Heart left ventricle (tissue), 16 donors: ENCODE measurements at regions of chr17 and their contacts with region 1.

Region 1: DNA sequence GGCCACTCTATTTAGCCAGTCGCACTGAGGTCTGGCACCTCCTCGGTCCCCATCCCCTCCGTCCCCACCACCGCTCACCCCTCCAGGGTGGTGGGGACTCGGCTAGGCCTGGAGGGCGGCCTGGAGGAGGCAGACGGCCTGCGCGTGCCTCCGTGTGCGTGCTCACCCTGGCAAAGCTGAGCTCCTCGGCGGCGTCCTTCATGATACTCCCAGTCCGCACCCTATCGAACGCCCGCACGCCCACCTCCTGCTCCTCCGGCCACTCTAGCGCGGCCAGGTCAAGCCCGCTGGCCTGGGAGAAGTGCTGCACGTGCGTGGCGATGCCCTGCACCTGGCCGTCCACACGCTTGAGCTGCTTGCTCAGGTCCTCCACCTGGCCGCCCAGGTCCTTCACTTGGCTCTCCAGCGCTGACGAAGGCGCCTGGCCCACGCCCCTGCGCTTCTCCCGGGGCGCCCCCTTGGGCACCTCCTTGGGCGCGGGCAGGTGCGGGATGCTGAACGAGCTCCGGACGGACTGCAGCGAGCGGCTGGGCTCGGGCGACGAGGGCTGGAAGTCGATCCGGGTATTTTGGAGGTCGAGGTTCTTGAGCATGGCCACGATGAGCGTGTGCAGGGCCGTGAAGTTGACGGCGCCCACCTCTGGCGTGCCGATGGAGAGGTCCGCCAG is 644 bp downstream of the QRICH2 start:
- DNase-seq: no peak
- ATAC-seq: peak in 1 of 4 donors; percentile 10
- H3K4me3 ChIP-seq: no peak overlapping the region
- H3K27ac ChIP-seq: no peak overlapping the region
- H3K4me1 ChIP-seq: peaks cover 0 to 3% (median 0%) of the 10 kb centered on the region in 12 donors
- H3K27me3 ChIP-seq: no peaks in the 10 kb centered on the region
- CTCF ChIP-seq: no peak
- POLR2A ChIP-seq: no peak

Region 2: DNA sequence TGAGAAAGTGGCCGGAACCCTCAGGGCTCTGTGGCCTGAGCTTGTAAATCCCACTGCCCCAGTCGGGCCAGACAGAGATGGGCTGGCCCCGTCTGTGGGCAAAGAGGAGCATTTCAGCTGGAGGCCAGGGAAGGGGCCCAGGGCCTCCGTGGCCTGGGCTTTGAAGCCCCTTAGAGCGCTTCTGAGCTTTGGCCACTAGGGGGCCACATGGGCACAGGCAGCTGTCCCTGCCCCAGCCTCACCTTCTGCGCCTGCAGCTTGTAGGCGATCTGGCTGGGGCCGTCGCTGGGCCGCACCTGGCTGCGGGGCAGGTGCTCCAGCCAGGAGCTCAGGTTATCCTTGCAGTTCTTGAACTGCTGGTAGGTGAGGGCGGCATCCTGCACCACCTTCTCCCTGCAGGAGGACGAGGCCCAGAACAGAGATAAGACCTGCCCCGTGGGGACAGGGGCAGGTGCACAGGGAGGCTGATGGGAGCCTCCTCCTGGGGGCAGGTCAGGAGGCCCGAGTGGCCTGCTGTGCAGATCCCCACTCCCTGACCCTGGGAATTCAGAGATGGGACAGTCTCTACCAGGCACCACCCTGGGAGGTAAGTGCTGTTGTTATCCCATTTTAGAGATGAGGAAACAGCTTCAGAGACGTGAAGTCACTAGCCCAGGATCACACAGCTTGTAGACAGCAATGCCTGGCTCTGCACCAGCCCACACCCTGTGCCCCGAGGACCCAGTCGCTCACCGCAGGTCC is 293.1 kb before region 1 on chr17:
- intact Hi-C with region 1: loop called in 2 of 10 experiments (anchors 5 kb)
- DNase-seq: peak; percentile 55 to 86 (median 67)
- ATAC-seq: peak; percentile 76 to 90 (median 80)
- H3K4me3 ChIP-seq: no peak overlapping the region
- H3K27ac ChIP-seq: no peak overlapping the region
- H3K4me1 ChIP-seq: peaks cover 0 to 6% (median 1%) of the 10 kb centered on the region in 12 donors
- H3K27me3 ChIP-seq: no peaks in the 10 kb centered on the region
- CTCF ChIP-seq: peak; percentile 86 to 99 (median 96)
- POLR2A ChIP-seq: no peak

Region 3: GRCh38 chr17:76262732-76263344 is 44.6 kb before region 1 on chr17:
- intact Hi-C with region 1: no loop called
- DNase-seq: no peak
- ATAC-seq: no peak
- H3K4me3 ChIP-seq: no peak overlapping the region
- H3K27ac ChIP-seq: peak overlapping the region in 6 of 12 donors; percentile 34 to 96 (median 42)
- H3K4me1 ChIP-seq: peaks cover 6 to 58% (median 24%) of the 10 kb centered on the region in 12 donors
- H3K27me3 ChIP-seq: no peaks in the 10 kb centered on the region
- CTCF ChIP-seq: no peak
- POLR2A ChIP-seq: no peak

Region 4: DNA sequence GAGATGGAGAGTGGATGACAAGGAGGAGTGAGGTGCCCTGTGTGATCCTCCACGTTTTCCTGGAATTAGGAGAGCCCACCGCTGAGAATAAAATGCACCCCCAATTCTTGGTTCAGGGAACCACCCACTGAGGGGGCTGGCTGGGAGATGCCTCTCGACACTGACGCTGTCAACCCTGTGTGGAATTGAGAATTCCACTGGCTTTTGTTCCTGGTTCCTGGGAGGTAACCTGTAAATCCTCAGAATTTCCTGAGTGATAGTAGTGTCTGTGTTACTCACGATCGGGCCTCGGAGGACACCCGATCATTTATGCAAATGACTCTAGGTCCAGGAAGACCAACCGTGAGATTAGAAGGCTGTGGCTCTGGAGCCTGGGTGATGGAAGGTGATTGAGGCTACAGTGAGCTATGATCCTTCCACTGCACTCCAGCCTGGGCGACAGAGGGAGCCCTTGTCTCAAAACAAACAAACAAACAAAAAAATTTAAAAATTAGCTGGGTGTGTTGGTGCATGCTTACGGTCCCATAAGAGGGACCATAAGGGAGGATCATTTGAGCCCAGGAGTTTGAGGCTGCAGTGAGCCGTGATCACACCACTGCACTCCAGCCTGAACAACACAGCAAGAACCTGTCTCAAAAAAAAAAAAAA is 57.9 kb after region 1 on chr17:
- intact Hi-C with region 1: no loop called
- DNase-seq: no peak
- ATAC-seq: no peak
- H3K4me3 ChIP-seq: no peak overlapping the region
- H3K27ac ChIP-seq: no peak overlapping the region
- H3K4me1 ChIP-seq: peaks cover 0 to 34% (median 15%) of the 10 kb centered on the region in 12 donors
- H3K27me3 ChIP-seq: no peaks in the 10 kb centered on the region
- CTCF ChIP-seq: peak in 11 of 12 donors; percentile 16 to 51 (median 32)
- POLR2A ChIP-seq: no peak

Region 5: DNA sequence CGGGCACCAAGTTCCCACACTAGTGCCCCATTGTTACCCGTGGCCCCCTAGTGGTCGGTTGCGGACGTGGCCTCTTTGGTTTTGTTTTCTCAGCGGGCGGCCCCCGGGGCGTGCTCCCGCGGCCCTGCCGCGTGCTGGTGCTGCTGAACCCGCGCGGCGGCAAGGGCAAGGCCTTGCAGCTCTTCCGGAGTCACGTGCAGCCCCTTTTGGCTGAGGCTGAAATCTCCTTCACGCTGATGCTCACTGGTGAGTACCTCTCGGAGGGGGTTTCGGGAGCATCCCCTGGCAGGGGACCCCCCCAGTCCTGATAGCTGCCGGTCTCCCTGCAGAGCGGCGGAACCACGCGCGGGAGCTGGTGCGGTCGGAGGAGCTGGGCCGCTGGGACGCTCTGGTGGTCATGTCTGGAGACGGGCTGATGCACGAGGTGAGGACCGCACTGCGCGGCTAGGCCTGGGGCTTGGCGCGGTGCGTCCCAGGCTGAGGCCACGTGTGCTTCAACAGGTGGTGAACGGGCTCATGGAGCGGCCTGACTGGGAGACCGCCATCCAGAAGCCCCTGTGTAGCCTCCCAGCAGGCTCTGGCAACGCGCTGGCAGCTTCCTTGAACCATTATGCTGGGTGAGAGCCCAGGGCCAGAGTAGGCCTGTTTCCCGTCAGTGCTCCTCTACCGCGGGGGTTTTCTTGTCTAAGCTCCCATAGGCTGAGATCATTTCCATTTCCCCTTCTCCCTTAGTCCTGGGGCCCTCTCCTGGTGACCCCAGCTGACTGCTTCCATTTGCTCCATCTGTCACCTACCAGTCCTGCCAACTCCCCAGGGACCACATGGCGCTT is 78.7 kb after region 1 on chr17:
- intact Hi-C with region 1: loop called in 2 of 10 experiments (anchors 5 kb)
- DNase-seq: peak; percentile 81 to 91 (median 83)
- ATAC-seq: peak in 3 of 4 donors; percentile 23 to 46 (median 37)
- H3K4me3 ChIP-seq: peak overlapping the region in 11 of 12 donors; percentile 58 to 76 (median 66)
- H3K27ac ChIP-seq: peak overlapping the region in 9 of 12 donors; percentile 21 to 95 (median 84)
- H3K4me1 ChIP-seq: peaks cover 0 to 50% (median 32%) of the 10 kb centered on the region in 12 donors
- H3K27me3 ChIP-seq: no peaks in the 10 kb centered on the region
- CTCF ChIP-seq: peak; percentile 71 to 95 (median 88)
- POLR2A ChIP-seq: no peak

Region 6: DNA sequence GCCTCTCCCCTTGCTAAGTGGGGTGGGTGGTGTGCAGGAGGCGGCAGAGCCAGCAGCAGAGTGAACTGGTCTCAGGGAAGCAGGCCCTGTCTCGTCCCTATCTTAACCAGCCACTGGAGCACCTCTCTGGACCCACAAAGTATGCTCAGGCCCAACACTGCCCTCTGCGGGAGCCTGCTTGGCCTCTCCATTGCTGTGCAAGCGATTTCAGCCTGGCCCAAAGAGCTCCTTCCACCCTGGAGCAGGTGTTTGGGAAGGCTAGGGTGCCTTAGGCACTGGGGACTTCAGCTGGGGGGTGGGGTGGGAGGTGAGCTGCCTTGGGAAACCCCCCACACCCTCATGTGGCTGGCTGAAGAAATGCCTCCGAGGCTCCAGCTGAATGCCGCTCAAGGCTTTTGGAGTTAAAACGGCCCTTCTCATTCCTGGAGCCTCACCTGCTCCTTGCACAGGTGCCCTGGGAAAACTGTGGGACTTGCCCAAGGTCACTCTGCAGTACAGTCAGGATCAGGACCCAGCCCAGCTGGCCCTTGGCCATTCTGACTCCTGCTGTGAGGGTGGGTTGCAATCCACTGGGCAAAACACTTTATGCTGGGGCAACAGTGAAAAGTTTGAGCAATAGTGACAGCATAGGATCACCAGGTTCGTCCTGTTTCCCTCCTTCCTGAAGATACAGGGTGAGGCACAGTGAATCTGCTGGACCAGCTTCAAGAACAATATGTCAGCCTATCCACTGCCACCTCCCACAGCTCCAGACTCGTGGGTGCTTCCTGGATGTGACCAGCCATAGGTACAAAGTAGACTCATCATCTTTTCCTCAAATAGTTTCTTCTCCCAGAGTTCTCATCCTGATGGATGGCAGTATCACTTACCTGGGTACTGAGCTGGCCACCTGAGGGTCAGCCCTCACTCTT is 151.4 kb after region 1 on chr17:
- intact Hi-C with region 1: loop called in 2 of 10 experiments (anchors 5 kb)
- DNase-seq: peak; percentile 41 to 74 (median 56)
- ATAC-seq: peak; percentile 84 to 86 (median 84)
- H3K4me3 ChIP-seq: no peak overlapping the region
- H3K27ac ChIP-seq: no peak overlapping the region
- H3K4me1 ChIP-seq: no peaks in the 10 kb centered on the region
- H3K27me3 ChIP-seq: no peaks in the 10 kb centered on the region
- CTCF ChIP-seq: peak; percentile 19 to 60 (median 44)
- POLR2A ChIP-seq: no peak

Region 7: DNA sequence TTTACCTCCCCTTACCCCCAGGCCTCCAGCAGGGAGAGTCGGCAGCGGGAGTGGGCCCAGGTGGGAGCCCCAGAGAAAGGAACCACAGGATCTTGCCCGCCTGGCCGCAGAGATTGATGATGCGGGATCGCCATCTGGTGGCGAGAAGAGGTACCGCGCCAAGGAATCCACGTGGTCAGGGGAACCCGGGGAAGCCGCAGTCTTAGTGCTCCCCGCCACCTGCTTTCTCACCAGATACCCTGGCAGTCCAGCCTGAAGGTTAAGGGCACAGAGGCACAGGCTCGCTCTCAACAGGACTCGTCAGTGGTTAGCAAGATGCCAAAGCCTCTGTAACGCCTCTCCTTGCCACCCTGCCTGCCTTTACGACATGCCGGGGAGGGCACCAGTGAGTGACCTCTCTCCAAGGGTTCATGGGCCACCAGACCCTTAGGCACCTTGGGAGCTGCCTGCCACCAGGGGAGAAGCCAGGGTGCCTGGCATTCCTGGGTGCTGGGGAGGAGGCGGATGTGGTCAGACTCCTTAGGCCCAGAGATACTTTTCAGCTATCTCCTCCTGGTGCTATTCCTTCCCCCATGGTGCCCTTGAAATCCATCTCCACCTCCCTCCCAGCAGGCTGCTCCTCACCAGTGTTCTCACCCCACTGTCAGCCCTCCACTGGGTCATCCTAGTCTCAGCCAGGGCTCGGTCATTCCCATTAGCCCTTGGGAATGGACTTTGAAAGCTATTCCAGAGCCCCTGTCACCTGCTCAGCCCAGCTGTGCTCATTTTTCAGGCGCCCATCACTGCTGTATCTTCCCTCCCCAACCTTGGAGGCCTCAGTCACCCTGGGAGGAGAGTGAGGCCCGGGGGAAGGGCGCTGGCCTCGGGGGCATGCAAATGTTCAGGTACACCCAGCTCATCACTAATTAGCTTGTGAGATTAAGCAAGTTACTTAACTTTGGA is 199.2 kb after region 1 on chr17:
- intact Hi-C with region 1: loop called in 5 of 10 experiments (anchors 5 to 10 kb)
- DNase-seq: peak; percentile 75 to 91 (median 80)
- ATAC-seq: peak; percentile 70 to 82 (median 78)
- H3K4me3 ChIP-seq: no peak overlapping the region
- H3K27ac ChIP-seq: no peak overlapping the region
- H3K4me1 ChIP-seq: peaks cover 0 to 38% (median 9%) of the 10 kb centered on the region in 12 donors
- H3K27me3 ChIP-seq: peaks cover 0 to 9% (median 0%) of the 10 kb centered on the region in 9 donors
- CTCF ChIP-seq: peak; percentile 90 to 97 (median 94)
- POLR2A ChIP-seq: no peak